Aorta (tissue), 5 donors: ENCODE measurements at regions of chr9 and their contacts with region 1.

Region 1: GRCh38 chr9:110842169-110842568 is 173.6 kb downstream of the MUSK start:
- DNase-seq: no peak
- ATAC-seq: no peak
- H3K4me3 ChIP-seq: no peak overlapping the region
- H3K27ac ChIP-seq: no peak overlapping the region
- H3K4me1 ChIP-seq: peaks cover 0 to 4% of the 10 kb centered on the region in 2 donors
- H3K27me3 ChIP-seq: no peaks in the 10 kb centered on the region

Region 2: GRCh38 chr9:110782701-110783100 is 59.5 kb before region 1 on chr9:
- intact Hi-C with region 1: loop called in 1 of 2 experiments (anchors 5 kb)
- DNase-seq: no peak
- ATAC-seq: peak; percentile 31
- H3K4me3 ChIP-seq: no peak overlapping the region
- H3K27ac ChIP-seq: no peak overlapping the region
- H3K4me1 ChIP-seq: peaks cover 0 to 3% of the 10 kb centered on the region in 2 donors
- H3K27me3 ChIP-seq: no peaks in the 10 kb centered on the region